ENCODE measurements at regions of chr2 and their contacts with region 1.

Region 1: DNA sequence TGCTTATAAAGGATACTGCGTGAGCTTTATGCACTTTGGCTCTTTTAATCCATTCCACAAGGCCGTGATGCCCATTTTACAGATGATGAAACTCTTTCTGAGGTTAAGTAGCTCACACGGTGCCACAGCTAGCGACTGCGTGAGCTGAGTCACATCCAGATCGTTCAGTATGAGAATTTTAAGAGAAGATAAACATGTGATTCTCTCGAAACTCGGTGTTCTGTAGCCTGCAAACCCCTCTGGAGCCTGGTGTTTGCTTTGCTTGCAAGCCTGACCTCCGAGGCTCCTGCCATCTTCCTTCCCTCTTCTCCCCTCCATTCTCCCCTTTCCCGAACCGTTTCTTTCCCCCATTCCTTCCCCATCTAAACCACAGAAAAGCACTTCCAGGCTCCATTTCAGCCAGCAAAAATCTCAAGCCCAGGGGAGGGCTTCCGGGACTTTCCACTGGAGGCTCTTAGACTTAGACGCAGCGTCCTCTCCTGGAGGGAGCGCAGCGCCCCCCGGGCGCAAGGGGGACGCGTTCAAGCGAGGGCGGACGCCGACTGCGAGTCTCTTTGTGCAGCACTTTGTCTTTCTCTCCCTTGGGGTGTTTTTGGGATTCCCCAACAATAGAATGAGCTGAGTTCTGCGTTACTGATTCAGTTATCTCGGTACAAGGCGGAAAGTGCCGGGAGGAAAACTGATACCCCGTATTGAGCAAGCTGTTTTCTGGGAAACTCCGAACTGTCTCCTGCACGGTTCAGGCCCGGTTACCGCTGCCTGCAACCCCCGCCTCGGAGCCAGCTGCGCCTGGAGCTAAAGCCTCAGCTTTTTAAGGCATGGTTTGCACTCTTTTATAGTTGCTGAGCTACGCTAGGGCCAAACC is 38.0 kb downstream of the CYP1B1 start:
- DNase-seq: peak; percentile 76
- ATAC-seq: peak; percentile 89
- H3K4me3 ChIP-seq: peak overlapping the region; percentile 65
- H3K27ac ChIP-seq: peak overlapping the region; percentile 85
- H3K4me1 ChIP-seq: peaks cover 23% of the 10 kb centered on the region
- H3K27me3 ChIP-seq: no peaks in the 10 kb centered on the region
- CTCF ChIP-seq: peak; percentile 51 to 76 (median 63); a peak in 5 of 6 replicates
- EP300 ChIP-seq: peak; percentile 26 to 40; a peak in 2 of 4 replicates
- POLR2A ChIP-seq: peak; percentile 57
- RAD21 ChIP-seq: peak; percentile 77

Region 2: DNA sequence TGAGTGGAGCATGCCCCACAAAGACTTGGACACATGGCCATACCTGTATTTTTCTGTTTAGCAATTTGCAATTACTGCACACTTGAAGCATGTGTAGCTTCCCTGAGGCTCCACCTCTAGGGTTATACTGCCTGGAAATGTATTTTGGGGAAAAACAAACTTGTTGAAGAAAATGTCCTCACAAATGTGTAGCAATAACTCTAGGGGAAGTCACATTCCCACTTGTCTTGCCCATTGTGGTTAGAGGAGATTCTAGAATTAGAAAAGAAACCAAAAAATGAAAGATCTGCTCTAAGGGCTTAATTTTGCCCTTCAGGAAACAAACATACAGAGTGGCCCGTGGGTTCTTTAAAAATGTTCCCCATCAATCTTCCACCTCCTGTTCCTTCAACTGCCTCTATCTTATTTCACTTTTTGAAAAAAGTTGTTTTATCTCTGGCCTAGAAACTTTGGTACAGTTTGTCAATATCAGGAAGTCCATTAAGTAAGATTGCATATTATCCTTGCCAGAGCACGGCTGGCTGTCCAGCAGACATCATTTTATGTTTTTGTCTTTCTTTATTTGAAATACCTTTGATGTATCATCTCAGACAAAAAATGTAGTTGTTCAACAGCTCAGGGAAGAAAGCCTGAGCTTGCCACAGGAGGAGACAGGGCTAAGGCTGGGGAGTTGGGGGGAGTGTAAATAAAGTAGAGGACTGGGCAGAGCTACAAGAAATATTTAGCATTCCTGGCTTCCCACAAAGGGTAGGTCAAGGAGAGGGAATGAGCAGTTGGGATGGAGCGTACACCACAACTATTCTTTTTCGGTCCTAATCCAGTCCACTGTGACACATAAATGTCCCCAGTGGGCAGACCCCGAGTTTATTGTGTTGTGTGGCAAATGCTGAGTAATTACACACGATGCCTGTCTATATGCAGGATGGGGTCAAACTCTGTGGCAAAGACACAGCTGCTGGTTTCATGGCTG is 269.7 kb before region 1 on chr2:
- CTCF ChIA-PET with region 1: no interaction called
- POLR2A ChIA-PET with region 1: no interaction called
- RAD21 ChIA-PET with region 1: no interaction called
- SMC1A ChIA-PET with region 1: no interaction called
- in situ Hi-C with region 1: no loop called
- intact Hi-C with region 1: no loop called
- DNase-seq: no peak
- ATAC-seq: no peak
- H3K4me3 ChIP-seq: no peak overlapping the region
- H3K27ac ChIP-seq: no peak overlapping the region
- H3K4me1 ChIP-seq: no peaks in the 10 kb centered on the region
- H3K27me3 ChIP-seq: no peaks in the 10 kb centered on the region
- CTCF ChIP-seq: no peak
- EP300 ChIP-seq: no peak
- POLR2A ChIP-seq: no peak
- RAD21 ChIP-seq: no peak

Region 3: GRCh38 chr2:37890893-37891495 is 147.0 kb before region 1 on chr2:
- CTCF ChIA-PET with region 1: interaction called, 5 read pairs
- POLR2A ChIA-PET with region 1: no interaction called
- RAD21 ChIA-PET with region 1: interaction called, 6 read pairs
- SMC1A ChIA-PET with region 1: interaction called, 5 read pairs
- in situ Hi-C with region 1: no loop called
- intact Hi-C with region 1: loop called (anchors 2 kb)
- DNase-seq: no peak
- ATAC-seq: peak; percentile 84
- H3K4me3 ChIP-seq: no peak overlapping the region
- H3K27ac ChIP-seq: no peak overlapping the region
- H3K4me1 ChIP-seq: peaks cover 43% of the 10 kb centered on the region
- H3K27me3 ChIP-seq: no peaks in the 10 kb centered on the region
- CTCF ChIP-seq: peak; percentile 73 to 84 (median 82)
- EP300 ChIP-seq: peak in 1 of 2 experiments; percentile 15; a peak in 1 of 4 replicates
- POLR2A ChIP-seq: no peak
- RAD21 ChIP-seq: peak; percentile 88

Region 4: GRCh38 chr2:37982147-37982582 is 55.8 kb before region 1 on chr2:
- CTCF ChIA-PET with region 1: interaction called, 7 read pairs
- POLR2A ChIA-PET with region 1: no interaction called
- RAD21 ChIA-PET with region 1: interaction called, 15 read pairs
- SMC1A ChIA-PET with region 1: interaction called, 13 read pairs
- in situ Hi-C with region 1: no loop called
- intact Hi-C with region 1: loop called (anchors 1 kb)
- DNase-seq: peak; percentile 30
- ATAC-seq: peak; percentile 61
- H3K4me3 ChIP-seq: no peak overlapping the region
- H3K27ac ChIP-seq: no peak overlapping the region
- H3K4me1 ChIP-seq: no peaks in the 10 kb centered on the region
- H3K27me3 ChIP-seq: no peaks in the 10 kb centered on the region
- CTCF ChIP-seq: peak; percentile 61 to 76 (median 70)
- EP300 ChIP-seq: no peak
- POLR2A ChIP-seq: no peak
- RAD21 ChIP-seq: peak; percentile 64

Region 5: DNA sequence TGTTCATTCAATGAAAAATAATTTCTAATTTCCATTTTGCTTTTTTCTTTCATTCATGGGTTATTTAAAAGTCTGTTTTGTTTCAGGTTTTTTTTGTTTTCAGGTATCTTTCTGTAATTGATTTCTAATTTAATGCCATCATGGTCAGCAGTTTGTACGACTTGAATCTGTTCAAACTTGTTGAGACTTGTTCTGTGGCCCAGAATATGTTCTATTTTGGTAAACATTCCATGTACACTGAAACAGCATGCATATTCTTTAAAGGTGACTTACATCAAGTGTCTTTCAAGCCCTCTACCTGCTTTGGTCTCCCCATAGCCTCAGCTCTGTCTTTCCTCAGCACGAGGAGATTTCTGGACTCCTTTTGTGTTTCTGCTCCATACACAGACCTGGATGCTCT is 11.1 kb before region 1 on chr2:
- CTCF ChIA-PET with region 1: interaction called, 17 read pairs
- POLR2A ChIA-PET with region 1: no interaction called
- RAD21 ChIA-PET with region 1: interaction called, 8 read pairs
- SMC1A ChIA-PET with region 1: interaction called, 18 read pairs
- in situ Hi-C with region 1: no loop called
- intact Hi-C with region 1: no loop called
- DNase-seq: no peak
- ATAC-seq: no peak
- H3K4me3 ChIP-seq: no peak overlapping the region
- H3K27ac ChIP-seq: no peak overlapping the region
- H3K4me1 ChIP-seq: no peaks in the 10 kb centered on the region
- H3K27me3 ChIP-seq: no peaks in the 10 kb centered on the region
- CTCF ChIP-seq: no peak
- EP300 ChIP-seq: no peak
- POLR2A ChIP-seq: no peak
- RAD21 ChIP-seq: no peak

Region 6: DNA sequence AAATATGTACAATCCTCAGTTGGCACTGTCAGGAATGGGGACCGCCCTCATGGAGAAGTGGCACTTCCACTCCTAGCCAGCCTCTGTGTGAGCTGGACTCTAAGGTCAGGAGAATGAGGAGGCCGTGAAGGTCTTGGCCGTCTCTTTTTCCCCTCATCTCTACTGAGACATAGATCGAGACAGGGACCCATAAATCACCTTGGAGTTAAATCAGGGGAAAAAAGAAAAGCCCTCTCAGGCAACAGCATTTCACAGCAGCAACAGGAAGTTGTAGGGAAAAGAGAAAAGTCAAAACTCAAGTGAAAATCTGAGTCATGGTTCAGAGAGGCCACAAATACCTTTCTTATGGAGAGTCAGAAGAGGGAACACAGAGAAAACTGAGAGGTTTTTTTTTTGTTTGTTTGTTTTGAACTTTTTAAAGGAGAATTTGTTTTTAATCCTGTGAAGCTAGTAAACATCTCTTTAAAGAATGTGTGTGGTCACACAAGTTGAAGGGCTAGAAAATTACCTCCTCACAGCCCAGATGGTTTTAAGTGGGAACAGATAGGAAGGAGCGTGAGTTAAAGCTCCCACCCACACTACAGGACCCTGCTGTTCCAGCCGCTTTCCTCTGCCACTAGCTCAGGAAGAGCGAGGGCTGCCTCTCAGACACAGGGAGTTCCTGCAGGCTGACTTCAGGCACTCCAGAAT is 68.6 kb after region 1 on chr2:
- CTCF ChIA-PET with region 1: interaction called, 10 read pairs
- POLR2A ChIA-PET with region 1: interaction called, 9 read pairs
- RAD21 ChIA-PET with region 1: interaction called, 4 read pairs
- SMC1A ChIA-PET with region 1: interaction called, 5 read pairs
- in situ Hi-C with region 1: no loop called
- intact Hi-C with region 1: no loop called
- DNase-seq: no peak
- ATAC-seq: peak; percentile 64
- H3K4me3 ChIP-seq: no peak overlapping the region
- H3K27ac ChIP-seq: peak overlapping the region; percentile 63
- H3K4me1 ChIP-seq: peaks cover 8% of the 10 kb centered on the region
- H3K27me3 ChIP-seq: no peaks in the 10 kb centered on the region
- CTCF ChIP-seq: no peak
- EP300 ChIP-seq: no peak
- POLR2A ChIP-seq: no peak
- RAD21 ChIP-seq: 0 out of 2 replicates have a peak, but pooled peaks have one; percentile 6

Region 7: GRCh38 chr2:38191516-38191915 is 153.5 kb after region 1 on chr2:
- CTCF ChIA-PET with region 1: no interaction called
- POLR2A ChIA-PET with region 1: no interaction called
- RAD21 ChIA-PET with region 1: no interaction called
- SMC1A ChIA-PET with region 1: no interaction called
- in situ Hi-C with region 1: no loop called
- intact Hi-C with region 1: no loop called
- DNase-seq: no peak
- ATAC-seq: no peak
- H3K4me3 ChIP-seq: no peak overlapping the region
- H3K27ac ChIP-seq: no peak overlapping the region
- H3K4me1 ChIP-seq: no peaks in the 10 kb centered on the region; the same call in 1 of the 2 replicates
- H3K27me3 ChIP-seq: no peaks in the 10 kb centered on the region
- CTCF ChIP-seq: no peak
- EP300 ChIP-seq: no peak
- POLR2A ChIP-seq: no peak
- RAD21 ChIP-seq: no peak

Region 8: DNA sequence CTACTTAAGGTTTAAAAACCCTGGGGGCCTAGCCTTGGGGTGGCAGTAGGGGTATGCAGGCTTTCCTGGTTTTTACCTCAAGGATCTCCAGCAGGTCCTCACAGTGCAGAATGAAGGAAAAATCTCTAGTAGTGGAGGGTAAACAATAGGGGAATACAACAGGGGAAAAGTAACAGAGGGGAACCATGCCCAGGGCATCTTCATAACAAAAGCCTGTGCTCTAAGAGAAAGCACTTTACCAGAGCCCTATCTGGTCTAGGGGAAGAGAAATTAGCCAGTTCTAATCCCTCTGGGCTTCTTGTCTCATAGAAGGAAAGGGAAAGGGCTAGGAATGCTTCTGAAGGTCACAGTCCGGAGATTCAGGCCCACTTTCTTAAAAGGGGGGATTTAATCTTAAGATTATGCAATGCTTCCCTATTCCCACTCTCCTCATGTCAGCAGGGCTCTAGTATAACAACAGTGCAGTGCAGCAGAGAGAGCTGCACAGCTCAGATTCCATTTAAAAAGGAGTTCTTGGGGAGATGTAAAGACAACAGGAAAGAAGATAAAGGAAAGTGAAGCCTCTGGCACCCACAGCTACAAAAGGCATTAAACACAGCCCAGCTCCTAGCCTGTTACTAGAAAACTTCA is 186.9 kb after region 1 on chr2:
- CTCF ChIA-PET with region 1: no interaction called
- POLR2A ChIA-PET with region 1: no interaction called
- RAD21 ChIA-PET with region 1: no interaction called
- SMC1A ChIA-PET with region 1: no interaction called
- in situ Hi-C with region 1: no loop called
- intact Hi-C with region 1: no loop called
- DNase-seq: no peak
- ATAC-seq: no peak
- H3K4me3 ChIP-seq: no peak overlapping the region
- H3K27ac ChIP-seq: no peak overlapping the region
- H3K4me1 ChIP-seq: no peaks in the 10 kb centered on the region
- H3K27me3 ChIP-seq: no peaks in the 10 kb centered on the region
- CTCF ChIP-seq: no peak
- EP300 ChIP-seq: no peak
- POLR2A ChIP-seq: no peak
- RAD21 ChIP-seq: no peak

Region 9: GRCh38 chr2:38264396-38265281 is 226.7 kb after region 1 on chr2:
- CTCF ChIA-PET with region 1: interaction called, 3 read pairs
- POLR2A ChIA-PET with region 1: no interaction called
- RAD21 ChIA-PET with region 1: no interaction called
- SMC1A ChIA-PET with region 1: interaction called, 3 read pairs
- in situ Hi-C with region 1: no loop called
- intact Hi-C with region 1: loop called (anchors 2 kb)
- DNase-seq: no peak
- ATAC-seq: no peak
- H3K4me3 ChIP-seq: no peak overlapping the region
- H3K27ac ChIP-seq: peak overlapping the region; percentile 78
- H3K4me1 ChIP-seq: peaks cover 32% of the 10 kb centered on the region
- H3K27me3 ChIP-seq: no peaks in the 10 kb centered on the region
- CTCF ChIP-seq: no peak
- EP300 ChIP-seq: no peak
- POLR2A ChIP-seq: no peak
- RAD21 ChIP-seq: no peak

Measured in GM12878 (cell line).